Activated T-helper 1 cell treated with anti-CD3 and anti-CD28 coated beads, Interleukin-12 subunit alpha, Interleukin-12 subunit beta, Interleukin-2, Interleukin-4 antibody, amounts not matched to agents 30 ng/mL and 10 ng/mL and 1 ng/mL, durations not matched to agents 14 hours and 24 hours and 36 hours (primary cell): ENCODE measurements at regions of chr21 and their contacts with region 1.

Region 1: GRCh38 chr21:41283211-41283818 is 33.3 kb upstream of the FAM3B start:
- DNase-seq: peak; percentile 40
- H3K4me3 Mint-ChIP-seq: no peak overlapping the region
- H3K27ac Mint-ChIP-seq: no peak overlapping the region
- H3K4me1 Mint-ChIP-seq: no peaks in the 10 kb centered on the region
- H3K27me3 Mint-ChIP-seq: peaks cover 29% of the 10 kb centered on the region

Region 2: GRCh38 chr21:41369920-41370839 is 86.9 kb after region 1 on chr21:
- intact Hi-C with region 1: loop called (anchors 1 kb)
- DNase-seq: peak; percentile 26
- H3K4me3 Mint-ChIP-seq: peak overlapping the region; percentile 64
- H3K27ac Mint-ChIP-seq: peak overlapping the region; percentile 69
- H3K4me1 Mint-ChIP-seq: peaks cover 47% of the 10 kb centered on the region
- H3K27me3 Mint-ChIP-seq: no peaks in the 10 kb centered on the region

Region 3: DNA sequence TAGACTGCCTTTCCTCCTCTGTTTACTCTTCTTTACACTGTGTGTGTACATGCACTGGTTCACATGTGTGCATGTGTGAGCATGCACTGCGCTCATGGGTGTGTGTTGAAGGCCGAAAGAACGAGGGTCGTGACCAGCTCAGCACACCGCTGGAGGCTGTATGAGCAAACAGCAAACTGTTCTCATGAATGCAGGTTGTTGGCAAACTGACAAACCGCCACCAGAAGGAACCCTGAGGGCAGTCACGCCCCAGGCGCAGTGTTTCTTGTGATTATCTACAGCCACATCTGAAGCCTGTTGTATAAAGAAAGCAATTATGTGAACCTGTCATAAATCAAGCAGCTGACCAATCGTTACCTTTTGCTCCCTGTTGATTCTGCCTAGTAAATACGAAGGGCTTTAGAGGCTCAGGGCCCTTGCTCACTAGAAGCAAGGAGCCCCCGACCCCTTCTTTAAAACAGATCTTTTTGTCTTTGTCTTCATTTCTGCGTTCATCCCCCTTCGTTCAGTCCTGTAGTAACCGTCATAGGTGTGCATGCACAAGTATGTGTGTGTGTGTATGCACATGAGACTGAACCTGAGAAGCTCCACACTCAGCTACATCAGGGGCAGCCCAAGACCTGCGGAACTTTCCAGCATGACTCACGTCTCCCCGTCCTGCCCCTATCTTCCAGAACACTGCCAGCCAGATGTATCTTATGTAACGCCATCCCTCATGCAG is 500.3 kb after region 1 on chr21:
- intact Hi-C with region 1: loop called (anchors 10 kb)
- DNase-seq: no peak
- H3K4me3 Mint-ChIP-seq: no peak overlapping the region
- H3K27ac Mint-ChIP-seq: no peak overlapping the region
- H3K4me1 Mint-ChIP-seq: peaks cover 8% of the 10 kb centered on the region
- H3K27me3 Mint-ChIP-seq: peaks cover 42% of the 10 kb centered on the region

Region 4: GRCh38 chr21:42107881-42108553 is 824.7 kb after region 1 on chr21:
- intact Hi-C with region 1: loop called (anchors 1 kb)
- DNase-seq: peak; percentile 50
- H3K4me3 Mint-ChIP-seq: no peak overlapping the region
- H3K27ac Mint-ChIP-seq: no peak overlapping the region
- H3K4me1 Mint-ChIP-seq: peaks cover 7% of the 10 kb centered on the region
- H3K27me3 Mint-ChIP-seq: peaks cover 14% of the 10 kb centered on the region